GM13976 (cell line): ENCODE measurements at regions of chrX and their contacts with region 1.

Region 1: GRCh38 chrX:19372170-19372546 is 28.4 kb downstream of the PDHA1 start:
- DNase-seq: peak; percentile 79
- CTCF ChIP-seq: peak; percentile 59

Region 2: DNA sequence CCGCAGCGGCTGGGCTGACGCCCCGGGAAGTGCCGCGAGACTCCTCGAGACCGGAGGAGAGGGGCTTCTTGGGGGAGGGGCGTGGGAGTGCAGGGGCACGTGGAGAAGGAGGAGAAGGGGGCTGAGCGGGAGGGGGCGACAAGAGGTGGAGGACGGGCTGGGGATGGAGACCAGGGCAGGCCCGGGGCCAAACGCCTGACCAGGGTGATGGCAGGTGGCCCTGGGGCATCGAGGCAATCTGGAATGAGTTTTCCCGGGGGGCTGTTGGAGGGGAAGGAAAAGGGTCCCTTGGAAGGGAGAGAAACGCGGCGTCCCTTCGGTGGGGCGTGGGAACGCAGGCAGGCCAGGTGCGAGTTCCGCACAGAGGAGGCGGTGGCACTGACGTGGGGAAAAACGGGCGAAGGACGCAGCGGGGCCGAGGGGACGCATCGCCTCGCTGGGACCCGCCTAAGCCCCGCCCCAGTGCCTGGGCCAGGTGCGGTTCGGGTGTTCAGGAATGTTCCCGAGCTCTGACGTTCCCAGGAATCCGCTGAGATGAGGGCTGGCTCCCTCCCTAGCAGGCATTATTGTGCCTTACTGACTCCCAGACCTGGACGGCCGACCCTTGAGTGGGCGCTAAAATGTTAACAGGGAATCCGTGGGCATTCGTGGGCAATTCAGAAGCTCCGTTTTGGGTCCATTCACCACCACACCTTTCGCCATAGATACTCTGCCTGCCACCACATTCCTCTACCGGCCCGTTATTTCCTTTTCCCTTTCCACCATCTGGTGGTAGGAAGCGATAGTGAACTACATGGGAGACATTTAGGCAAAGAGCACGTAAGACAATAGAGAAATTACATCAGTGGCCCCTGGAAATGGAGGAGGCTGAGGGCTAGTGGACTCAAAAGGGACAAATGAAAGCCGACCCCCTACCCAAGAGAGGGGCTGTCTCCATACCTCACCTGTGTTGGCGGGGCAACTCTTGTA is 516.0 kb after region 1 on chrX:
- in situ Hi-C with region 1: loop called (anchors 25 kb)
- DNase-seq: peak; percentile 52
- CTCF ChIP-seq: peak; percentile 34